ENCODE measurements at regions of chr16 and their contacts with region 1.

Region 1: GRCh38 chr16:81035398-81035974 is at the start of gene ATMIN:
- DNase-seq: peak; percentile 88
- H3K4me3 Mint-ChIP-seq: peak within 1 kb of the TSS; percentile 79
- H3K27ac Mint-ChIP-seq: peak within 1 kb of the TSS; percentile 63
- H3K4me1 Mint-ChIP-seq: peaks cover 26% of the 10 kb centered on the region
- H3K27me3 Mint-ChIP-seq: no peaks in the 10 kb centered on the region
- total RNA-seq, gene ATMIN: 29.6 to 33.8 TPM

Region 2: DNA sequence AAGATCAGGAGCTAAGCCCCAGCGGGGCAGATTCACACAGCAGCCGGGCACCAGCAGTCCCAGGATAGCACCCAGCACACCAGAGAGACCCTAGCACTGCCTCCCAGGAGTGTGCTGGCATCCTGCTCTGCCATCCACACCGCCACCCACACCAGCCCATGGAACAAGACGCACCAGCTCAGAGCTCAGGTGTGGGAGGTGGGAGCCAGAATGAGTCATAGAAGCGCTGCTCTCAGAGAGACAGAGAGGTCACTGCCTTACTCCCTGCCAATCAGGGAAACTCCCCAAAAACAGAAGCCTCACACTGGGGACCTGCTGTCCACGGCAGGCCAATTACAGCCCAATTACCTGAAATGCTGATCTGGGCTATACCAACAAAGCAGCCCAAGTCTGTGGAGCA is 296.0 kb before region 1 on chr16:
- CTCF ChIA-PET with region 1: no interaction called
- POLR2A ChIA-PET with region 1: no interaction called
- DNase-seq: no peak
- H3K4me3 Mint-ChIP-seq: no peak overlapping the region
- H3K27ac Mint-ChIP-seq: no peak overlapping the region
- H3K4me1 Mint-ChIP-seq: peaks cover 32% of the 10 kb centered on the region
- H3K27me3 Mint-ChIP-seq: no peaks in the 10 kb centered on the region

Region 3: DNA sequence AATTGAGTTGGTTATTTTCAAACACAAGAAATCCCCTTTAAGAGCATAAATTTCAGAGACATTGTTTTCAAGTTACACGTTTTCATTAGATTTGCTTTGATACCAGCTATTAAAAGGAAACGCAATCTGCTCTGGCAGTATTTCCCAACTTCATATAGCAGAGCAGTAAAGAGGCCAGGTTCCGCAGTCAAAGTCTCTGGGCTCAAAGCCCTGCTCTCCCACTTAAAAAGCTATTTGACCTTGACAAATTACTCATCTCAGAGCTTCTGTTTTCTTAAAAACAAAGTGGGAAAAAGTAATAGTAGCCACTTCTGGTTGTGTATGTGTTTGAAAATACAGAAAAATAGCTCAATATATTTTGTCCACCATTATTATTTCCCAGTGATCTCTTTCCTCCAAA is 141.4 kb before region 1 on chr16:
- CTCF ChIA-PET with region 1: no interaction called
- POLR2A ChIA-PET with region 1: no interaction called
- DNase-seq: no peak
- H3K4me3 Mint-ChIP-seq: no peak overlapping the region
- H3K27ac Mint-ChIP-seq: no peak overlapping the region
- H3K4me1 Mint-ChIP-seq: no peaks in the 10 kb centered on the region
- H3K27me3 Mint-ChIP-seq: peaks cover 6% of the 10 kb centered on the region

Region 4: DNA sequence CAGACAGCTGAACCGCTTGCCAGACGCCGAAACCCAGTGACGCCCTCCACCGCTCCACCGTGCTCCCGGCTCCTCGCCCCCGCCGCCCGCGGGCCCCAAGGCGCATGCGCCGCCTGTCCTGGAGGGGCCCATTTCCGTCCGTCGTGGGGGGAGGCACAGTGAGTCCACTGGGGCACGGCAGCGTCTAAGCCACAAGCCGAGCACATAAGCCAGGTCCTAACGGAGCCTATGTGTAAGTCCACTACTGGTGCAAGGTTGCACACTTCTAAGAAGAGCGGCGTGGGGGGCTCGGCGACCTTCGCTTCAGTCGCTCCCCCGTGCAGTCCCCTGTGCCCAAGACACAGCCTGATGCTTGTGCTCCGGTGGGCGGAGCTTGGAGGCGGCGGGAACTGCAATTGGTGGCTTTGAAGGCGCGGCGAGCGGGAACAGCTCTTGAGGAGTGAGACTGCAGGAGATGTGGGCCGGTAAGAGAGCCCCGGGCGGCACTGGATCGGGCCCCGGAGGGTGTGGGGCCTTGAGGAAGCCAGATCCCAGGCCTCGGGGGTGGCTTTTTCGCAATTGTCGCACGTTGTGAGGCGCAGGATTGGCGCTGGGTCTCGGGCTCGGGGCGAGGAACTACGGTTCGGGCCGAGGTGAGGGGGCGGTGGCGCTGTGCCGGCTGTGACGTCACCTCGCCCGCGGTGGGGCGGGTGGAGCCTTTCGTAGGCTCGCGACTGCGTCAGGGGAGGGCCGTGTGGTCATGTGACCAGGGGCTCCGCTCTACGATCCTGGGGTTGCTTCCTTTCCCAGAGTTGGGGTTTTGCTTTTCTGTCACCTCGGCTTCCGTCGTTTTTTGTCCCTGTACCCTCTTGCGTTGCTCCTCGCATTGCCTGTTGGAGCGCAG is 28.4 kb before region 1 on chr16 and contains the starts of genes CENPN and CMC2:
- CTCF ChIA-PET with region 1: interaction called, 75 read pairs
- POLR2A ChIA-PET with region 1: interaction called, 70 read pairs
- DNase-seq: peak; percentile 98
- H3K4me3 Mint-ChIP-seq: peak within 1 kb of the TSS; percentile 95
- H3K27ac Mint-ChIP-seq: peak within 1 kb of the TSS; percentile 100
- H3K4me1 Mint-ChIP-seq: peaks cover 58% of the 10 kb centered on the region
- H3K27me3 Mint-ChIP-seq: no peaks in the 10 kb centered on the region
- total RNA-seq, gene CENPN: 62.2 to 66.9 TPM
- total RNA-seq, gene CMC2: 90.7 to 99.9 TPM

Region 5: GRCh38 chr16:81018496-81018895 is 17.0 kb before region 1 on chr16:
- CTCF ChIA-PET with region 1: interaction called, 14 read pairs
- POLR2A ChIA-PET with region 1: interaction called, 6 read pairs
- DNase-seq: no peak
- H3K4me3 Mint-ChIP-seq: no peak overlapping the region
- H3K27ac Mint-ChIP-seq: no peak overlapping the region
- H3K4me1 Mint-ChIP-seq: peaks cover 9% of the 10 kb centered on the region
- H3K27me3 Mint-ChIP-seq: no peaks in the 10 kb centered on the region

Region 6: DNA sequence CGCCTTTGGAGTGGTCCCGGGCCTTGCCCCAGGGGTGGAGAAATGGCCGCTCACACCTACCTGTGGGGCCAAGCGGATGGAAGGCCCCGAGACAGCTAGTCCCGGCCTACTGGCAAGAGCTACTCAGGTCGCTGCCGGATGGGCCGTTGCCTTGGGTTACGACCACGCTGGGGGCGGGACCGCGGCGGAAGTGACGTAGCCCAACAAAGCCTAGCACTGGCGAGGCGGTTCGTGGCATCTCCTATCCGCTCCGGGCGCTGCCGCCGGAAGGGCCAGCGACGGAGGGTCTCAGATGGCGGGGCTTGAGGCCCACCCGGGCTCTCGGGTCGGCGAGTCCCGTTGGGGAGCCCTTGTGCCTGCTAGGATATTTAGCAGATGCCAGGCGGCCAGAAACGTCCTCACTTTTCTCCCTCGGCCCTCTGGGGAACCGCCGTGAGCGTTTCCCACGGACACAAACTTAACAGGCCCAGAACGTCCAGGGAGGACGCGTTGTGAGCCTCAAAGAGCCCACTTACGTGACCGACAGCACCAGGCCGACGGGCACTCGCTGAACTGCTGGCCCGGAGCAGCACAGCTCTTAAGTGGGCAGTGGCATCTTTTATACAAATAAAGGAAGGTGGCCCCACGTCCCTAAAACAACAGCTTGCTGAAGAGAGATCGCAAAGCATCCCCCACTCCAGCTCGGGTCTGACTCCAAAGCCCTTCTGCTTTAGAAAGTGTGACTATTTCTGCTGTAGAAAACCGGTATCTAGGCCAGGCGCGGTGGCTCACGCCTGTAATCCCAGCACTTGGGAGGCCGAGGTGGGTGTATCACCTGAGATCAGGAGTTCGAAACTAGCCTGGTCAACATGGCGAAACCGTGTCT is 41.8 kb after region 1 on chr16 and contains the start of gene C16orf46:
- CTCF ChIA-PET with region 1: interaction called, 63 read pairs
- POLR2A ChIA-PET with region 1: interaction called, 22 read pairs
- DNase-seq: peak; percentile 98
- H3K4me3 Mint-ChIP-seq: peak within 1 kb of the TSS; percentile 24
- H3K27ac Mint-ChIP-seq: no peak within 1 kb of the TSS
- H3K4me1 Mint-ChIP-seq: peaks cover 21% of the 10 kb centered on the region
- H3K27me3 Mint-ChIP-seq: peaks cover 2% of the 10 kb centered on the region
- total RNA-seq, gene C16orf46: 0.73 TPM in 1 of 2 experiments, not detected in the other

Region 7: DNA sequence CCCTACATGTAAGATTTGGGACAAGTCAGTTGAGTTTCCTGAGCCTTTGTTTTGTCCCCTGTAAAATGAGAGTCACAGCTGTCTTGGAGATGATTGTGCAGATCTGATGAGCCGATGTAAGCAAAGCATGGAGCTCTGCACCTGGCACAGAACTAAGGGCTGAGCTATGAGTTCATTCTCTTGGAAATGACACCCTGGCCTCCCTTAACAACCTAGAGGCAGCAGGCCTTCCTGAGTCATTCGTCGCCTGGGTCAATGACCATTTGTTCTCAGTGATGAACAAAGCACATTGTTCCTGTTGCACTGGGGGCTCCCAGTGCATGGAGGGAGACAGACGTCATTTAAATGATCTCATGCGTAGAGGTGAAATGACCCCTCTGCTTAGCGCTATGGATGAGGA is 123.5 kb after region 1 on chr16:
- CTCF ChIA-PET with region 1: no interaction called
- POLR2A ChIA-PET with region 1: no interaction called
- DNase-seq: no peak
- H3K4me3 Mint-ChIP-seq: no peak overlapping the region
- H3K27ac Mint-ChIP-seq: no peak overlapping the region
- H3K4me1 Mint-ChIP-seq: no peaks in the 10 kb centered on the region
- H3K27me3 Mint-ChIP-seq: no peaks in the 10 kb centered on the region

Region 8: DNA sequence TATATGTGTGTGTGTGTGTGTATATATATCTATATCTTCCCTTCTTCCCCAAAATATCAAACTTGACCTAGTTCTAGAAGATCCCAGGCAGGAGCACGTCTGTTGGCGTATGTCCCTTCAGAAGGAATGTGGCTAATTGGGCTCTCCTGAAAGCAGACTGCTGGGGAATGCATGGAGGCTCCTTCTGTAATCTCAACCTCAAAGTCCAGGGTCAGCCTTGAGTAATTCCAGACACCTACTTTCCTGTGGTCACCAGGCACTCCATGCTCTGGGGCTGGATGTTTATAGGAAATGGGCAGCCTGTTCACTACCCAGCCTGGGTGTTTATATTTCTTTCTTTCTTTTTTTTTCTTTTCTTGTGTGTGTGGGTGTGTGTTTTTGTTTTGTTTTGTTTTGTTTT is 216.4 kb after region 1 on chr16:
- CTCF ChIA-PET with region 1: no interaction called
- POLR2A ChIA-PET with region 1: no interaction called
- DNase-seq: no peak
- H3K4me3 Mint-ChIP-seq: no peak overlapping the region
- H3K27ac Mint-ChIP-seq: no peak overlapping the region
- H3K4me1 Mint-ChIP-seq: no peaks in the 10 kb centered on the region
- H3K27me3 Mint-ChIP-seq: no peaks in the 10 kb centered on the region

Measured in activated CD4-positive, alpha-beta memory T cell treated with anti-CD3 and anti-CD28 coated beads, Interleukin-2, amount 10 ng/mL, durations not matched to agents 7 days and 5 days (primary cell).